Dendritic cell treated with granulocyte-macrophage colony-stimulating factor and Interleukin-4, amounts not matched to agents 40 ng/mL and 50 ng/mL, for 4 days (primary cell): ENCODE measurements at regions of chr4 and their contacts with region 1.

Region 1: DNA sequence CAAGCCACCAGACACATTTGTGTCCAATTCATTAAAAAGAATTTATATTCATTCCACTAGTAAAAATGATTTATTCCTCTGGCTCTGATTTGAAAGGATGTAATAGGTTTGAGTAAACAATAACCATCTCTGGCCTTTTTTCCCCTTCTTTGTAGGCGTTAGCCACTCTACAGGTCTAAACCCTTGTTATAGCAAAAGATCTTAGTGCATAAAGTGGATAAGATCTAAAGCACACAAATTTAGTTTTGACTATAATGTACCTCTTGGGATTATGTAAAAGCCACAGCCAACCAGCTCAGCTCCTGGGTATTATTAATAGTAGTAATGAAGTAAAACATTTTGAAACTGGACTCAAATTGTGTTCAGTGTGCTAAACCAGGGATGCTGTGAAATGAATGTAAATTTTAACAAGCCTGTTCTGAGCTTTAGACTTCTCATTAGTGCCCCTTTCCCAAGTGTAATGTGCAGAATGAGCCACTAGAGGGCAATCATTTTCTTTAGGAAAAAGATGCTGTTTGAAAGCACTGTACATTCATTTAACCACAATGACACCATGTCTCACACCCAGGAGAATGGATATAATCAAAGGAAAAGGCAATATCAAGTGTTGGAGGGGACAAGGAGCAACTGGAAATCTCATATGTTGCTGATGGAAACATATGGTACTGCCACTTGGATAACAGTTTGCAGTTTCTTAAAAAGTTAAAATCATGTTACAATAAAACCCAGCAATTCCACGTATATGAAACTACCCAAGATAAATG is 69.7 kb downstream of the KLHL8 start:
- H3K4me3 Mint-ChIP-seq: no peak overlapping the region
- H3K27ac Mint-ChIP-seq: no peak overlapping the region
- H3K4me1 Mint-ChIP-seq: no peaks in the 10 kb centered on the region
- H3K27me3 Mint-ChIP-seq: no peaks in the 10 kb centered on the region

Region 2: DNA sequence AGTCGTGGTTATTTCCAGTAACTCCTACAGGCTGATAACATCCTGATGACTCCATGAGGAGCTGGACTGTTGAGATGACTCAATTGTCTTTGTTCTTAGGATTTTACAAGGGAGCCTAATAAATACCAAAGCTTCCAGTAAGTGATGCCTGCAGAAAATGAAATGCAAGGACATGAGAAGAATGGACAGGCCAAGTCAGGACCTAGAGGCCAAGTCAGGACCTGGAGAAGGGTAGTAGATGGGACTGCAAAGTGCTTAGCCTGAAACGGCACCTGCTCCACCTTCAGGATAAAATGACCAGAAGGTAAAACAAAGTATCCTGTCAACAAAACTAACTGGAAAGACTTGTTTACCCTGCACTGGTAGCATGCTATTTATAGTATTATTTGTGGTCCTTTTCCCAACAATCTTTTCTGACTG is 295.1 kb before region 1 on chr4:
- intact Hi-C with region 1: no loop called
- H3K4me3 Mint-ChIP-seq: no peak overlapping the region
- H3K27ac Mint-ChIP-seq: no peak overlapping the region
- H3K4me1 Mint-ChIP-seq: no peaks in the 10 kb centered on the region
- H3K27me3 Mint-ChIP-seq: no peaks in the 10 kb centered on the region

Region 3: DNA sequence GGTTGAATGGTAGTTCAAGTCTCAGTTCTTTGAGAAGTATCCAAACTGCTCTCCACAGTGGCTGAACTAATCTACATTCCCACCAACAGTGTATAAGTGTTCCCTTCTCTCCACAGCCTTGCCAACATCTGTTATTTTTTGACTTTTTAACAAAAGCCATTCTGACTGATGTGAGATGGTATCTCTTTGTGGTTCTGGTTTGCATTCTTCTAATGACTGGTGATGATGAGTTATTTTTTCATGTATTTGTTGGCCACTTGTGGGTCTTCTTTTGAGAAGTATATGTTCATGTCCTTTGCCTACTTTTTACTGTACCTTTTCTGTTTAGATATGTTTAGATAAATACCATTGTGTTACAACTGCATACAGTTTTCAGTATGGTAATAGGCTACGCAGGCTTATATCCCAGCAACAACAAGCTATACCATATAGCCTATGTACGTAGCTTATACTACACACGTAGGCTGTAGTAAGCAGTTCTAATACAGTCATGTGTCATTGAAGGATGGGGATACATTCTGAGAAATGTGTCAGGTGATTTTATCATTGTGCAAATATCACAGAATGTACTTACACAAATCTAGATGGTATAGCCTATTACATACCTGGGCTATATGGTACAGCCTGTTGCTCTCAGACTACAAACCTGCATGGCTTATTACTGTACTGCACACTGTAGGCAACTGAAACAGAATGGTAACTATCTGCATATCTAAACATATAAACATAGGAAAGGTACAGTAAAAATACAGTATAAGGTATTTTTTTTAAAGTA is 41.7 kb after region 1 on chr4:
- intact Hi-C with region 1: loop called (anchors 5 kb)
- H3K4me3 Mint-ChIP-seq: no peak overlapping the region
- H3K27ac Mint-ChIP-seq: no peak overlapping the region
- H3K4me1 Mint-ChIP-seq: peaks cover 4% of the 10 kb centered on the region
- H3K27me3 Mint-ChIP-seq: no peaks in the 10 kb centered on the region

Region 4: DNA sequence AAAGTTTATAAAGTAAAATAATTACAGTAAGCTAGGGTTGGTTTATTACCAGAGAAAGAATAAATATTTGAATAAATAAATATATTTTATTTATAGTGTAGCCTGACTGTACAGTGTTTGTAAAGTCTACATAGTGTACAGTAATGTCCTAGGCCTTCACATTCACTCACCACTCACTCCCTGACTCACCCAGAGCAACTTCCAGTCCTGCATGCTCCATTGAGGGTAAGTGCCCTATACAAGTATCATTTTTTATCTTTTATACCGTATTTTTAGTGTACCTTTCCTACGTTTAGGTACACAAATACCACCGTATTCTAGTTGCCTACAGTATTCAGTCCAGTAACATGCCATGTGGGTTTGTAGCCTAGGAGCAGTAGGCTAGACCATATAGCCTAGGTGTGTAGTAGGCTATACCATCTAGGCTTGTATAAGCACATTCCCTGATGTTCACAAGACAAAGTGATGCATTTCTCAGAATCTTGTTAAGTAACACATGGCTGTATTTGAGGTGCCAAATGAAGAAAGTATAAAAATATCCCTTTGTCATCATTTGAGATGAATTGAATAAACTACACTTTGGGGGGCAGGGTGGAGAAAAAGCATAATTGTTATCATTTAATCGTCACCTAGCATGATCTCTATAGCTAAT is 84.5 kb after region 1 on chr4:
- intact Hi-C with region 1: loop called (anchors 1 kb)
- H3K4me3 Mint-ChIP-seq: peak overlapping the region; percentile 77
- H3K27ac Mint-ChIP-seq: peak overlapping the region; percentile 84
- H3K4me1 Mint-ChIP-seq: peaks cover 2% of the 10 kb centered on the region
- H3K27me3 Mint-ChIP-seq: peaks cover 2% of the 10 kb centered on the region

Region 5: GRCh38 chr4:87465739-87466366 is 315.2 kb after region 1 on chr4:
- intact Hi-C with region 1: loop called (anchors 5 kb)
- H3K4me3 Mint-ChIP-seq: no peak overlapping the region
- H3K27ac Mint-ChIP-seq: no peak overlapping the region
- H3K4me1 Mint-ChIP-seq: no peaks in the 10 kb centered on the region
- H3K27me3 Mint-ChIP-seq: no peaks in the 10 kb centered on the region